Endothelial cell of umbilical vein (primary cell): ENCODE measurements at regions of chr2 and their contacts with region 1.

Region 1: DNA sequence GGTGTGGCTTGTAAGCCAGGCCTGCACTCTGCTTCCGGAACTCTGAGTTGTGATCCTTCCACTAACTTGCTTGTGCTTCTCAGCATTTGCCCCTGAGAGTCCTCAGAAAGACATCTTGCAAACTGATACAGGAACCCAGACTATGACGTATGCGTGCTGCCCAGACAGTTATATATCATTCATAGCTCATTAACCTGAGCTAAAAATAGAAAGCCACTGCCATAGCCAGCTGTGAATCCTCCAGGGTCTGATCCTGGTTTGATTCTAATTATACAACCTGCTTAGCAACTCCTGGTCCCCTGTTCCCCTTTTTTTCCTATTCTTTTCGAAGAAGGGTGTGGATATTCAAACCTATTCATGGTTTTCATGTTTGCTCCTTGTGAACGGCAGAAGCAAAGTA is 63.7 kb downstream of the MARCHF4 start:
- DNase-seq: no peak
- H3K4me3 ChIP-seq: no peak overlapping the region
- H3K27ac ChIP-seq: no peak overlapping the region
- H3K4me1 ChIP-seq: peaks cover 10% of the 10 kb centered on the region
- H3K27me3 ChIP-seq: no peaks in the 10 kb centered on the region
- CTCF ChIP-seq: no peak
- POLR2A ChIP-seq: no peak

Region 2: DNA sequence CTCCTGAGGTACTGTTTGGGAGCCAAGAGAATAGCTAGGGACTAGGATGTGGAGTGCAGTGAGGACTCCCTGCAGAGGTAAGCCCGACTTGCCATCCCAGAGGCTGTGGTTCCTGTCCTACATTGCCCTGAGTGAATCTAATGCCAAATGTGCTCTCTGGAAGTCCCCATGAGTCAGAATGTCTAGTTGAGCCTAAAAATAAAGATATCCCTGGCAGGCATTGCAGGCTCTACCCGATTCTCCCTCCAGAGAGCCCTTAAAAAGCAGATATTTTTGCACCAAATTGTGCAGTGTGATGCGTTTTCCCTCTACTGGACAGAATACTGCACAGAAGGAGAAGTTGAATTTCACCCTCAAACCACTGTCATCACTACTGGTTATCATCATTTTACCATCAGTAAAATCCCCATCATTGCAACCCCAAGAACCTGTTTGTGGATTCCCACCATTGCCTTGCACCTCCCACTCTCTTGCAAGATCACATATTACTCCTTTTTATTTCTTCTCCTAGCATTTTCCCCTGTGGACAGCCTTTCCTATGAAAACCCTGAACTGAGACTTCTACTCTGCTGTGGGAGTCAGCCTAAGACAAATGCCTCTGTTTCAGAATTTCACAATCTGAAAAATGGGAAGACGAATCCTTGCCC is 34.3 kb before region 1 on chr2:
- CTCF ChIA-PET with region 1: no interaction called
- POLR2A ChIA-PET with region 1: no interaction called
- dilution Hi-C with region 1: no loop called
- intact Hi-C with region 1: no loop called
- DNase-seq: no peak
- H3K4me3 ChIP-seq: no peak overlapping the region
- H3K27ac ChIP-seq: no peak overlapping the region
- H3K4me1 ChIP-seq: peaks cover 2% of the 10 kb centered on the region
- H3K27me3 ChIP-seq: no peaks in the 10 kb centered on the region
- CTCF ChIP-seq: no peak
- POLR2A ChIP-seq: no peak

Region 3: GRCh38 chr2:216328347-216328746 is 19.8 kb after region 1 on chr2:
- CTCF ChIA-PET with region 1: interaction called, 3 read pairs
- POLR2A ChIA-PET with region 1: no interaction called
- dilution Hi-C with region 1: no loop called
- intact Hi-C with region 1: loop called (anchors 2 kb)
- DNase-seq: peak; percentile 20
- H3K4me3 ChIP-seq: no peak overlapping the region
- H3K27ac ChIP-seq: no peak overlapping the region
- H3K4me1 ChIP-seq: no peaks in the 10 kb centered on the region
- H3K27me3 ChIP-seq: no peaks in the 10 kb centered on the region
- CTCF ChIP-seq: peak in 1 of 2 donors; percentile 9
- POLR2A ChIP-seq: no peak